Panc1 (cell line): ENCODE measurements at regions of chr18 and their contacts with region 1.

Region 1: DNA sequence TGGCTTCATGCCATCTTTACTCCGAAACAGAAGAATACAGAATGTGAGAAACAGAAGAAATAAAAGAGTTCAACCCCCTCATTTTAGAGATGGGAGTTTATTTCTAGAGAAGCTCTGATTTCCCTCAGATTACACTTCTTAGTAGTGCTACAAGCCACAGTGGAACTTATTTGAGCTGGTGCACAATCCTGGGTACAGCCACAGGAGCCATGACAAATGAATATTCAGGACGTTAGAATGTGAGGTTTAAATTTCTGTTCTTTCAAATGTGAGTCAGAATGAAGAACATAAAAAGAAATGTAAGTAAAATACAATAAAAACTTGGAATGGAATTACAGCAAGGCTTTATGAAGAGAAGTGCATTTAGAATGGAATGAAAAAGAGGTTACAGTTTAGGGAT is 37.9 kb upstream of the SMCHD1 start:
- DNase-seq: no peak
- ATAC-seq: no peak
- H3K4me3 ChIP-seq: no peak overlapping the region
- H3K27ac ChIP-seq: no peak overlapping the region
- H3K4me1 ChIP-seq: no peaks in the 10 kb centered on the region
- H3K27me3 ChIP-seq: no peaks in the 10 kb centered on the region
- CTCF ChIP-seq: no peak

Region 2: DNA sequence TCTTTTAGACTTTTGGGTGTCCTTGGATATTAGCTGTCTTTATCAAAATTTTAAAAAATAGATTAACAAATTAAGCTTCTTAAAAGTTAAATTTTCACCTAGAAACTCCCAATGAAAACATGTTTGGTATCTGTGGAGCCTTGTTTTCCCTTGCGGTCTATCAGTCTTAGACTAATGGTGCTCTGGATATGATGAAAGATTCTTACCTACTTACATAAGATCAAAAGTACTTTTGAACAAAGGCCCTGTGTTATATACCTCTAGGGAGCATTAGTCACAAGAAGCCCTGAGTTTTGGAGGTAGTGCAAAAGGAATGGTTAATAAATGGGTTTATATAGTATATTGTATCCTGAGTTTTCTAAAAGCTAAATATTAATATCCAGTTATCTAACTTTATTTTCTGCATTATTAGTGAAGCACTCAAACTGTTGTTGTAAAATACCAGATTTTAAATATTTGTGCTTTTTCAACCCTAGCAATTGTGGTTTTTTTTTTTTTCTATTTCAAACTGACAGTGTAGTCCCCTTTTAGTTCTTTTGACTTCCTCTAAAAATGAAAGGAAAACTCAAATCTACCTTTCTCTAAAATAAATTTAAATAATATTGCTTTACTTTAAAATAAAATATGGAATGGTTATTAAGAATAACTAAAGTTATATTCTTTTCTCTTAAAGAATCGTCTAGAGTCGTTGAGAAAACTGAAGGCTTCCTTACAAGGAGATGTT is 28.1 kb before region 1 on chr18:
- CTCF ChIA-PET with region 1: interaction called, 14 read pairs
- POLR2A ChIA-PET with region 1: no interaction called
- in situ Hi-C with region 1: no loop called
- intact Hi-C with region 1: no loop called
- DNase-seq: no peak
- ATAC-seq: no peak
- H3K4me3 ChIP-seq: no peak overlapping the region
- H3K27ac ChIP-seq: peak overlapping the region; percentile 34; the same call in 1 of the 2 replicates
- H3K4me1 ChIP-seq: no peaks in the 10 kb centered on the region
- H3K27me3 ChIP-seq: no peaks in the 10 kb centered on the region
- CTCF ChIP-seq: no peak